Panc1 (cell line): ENCODE measurements at regions of chr20 and their contacts with region 1.

Region 1: DNA sequence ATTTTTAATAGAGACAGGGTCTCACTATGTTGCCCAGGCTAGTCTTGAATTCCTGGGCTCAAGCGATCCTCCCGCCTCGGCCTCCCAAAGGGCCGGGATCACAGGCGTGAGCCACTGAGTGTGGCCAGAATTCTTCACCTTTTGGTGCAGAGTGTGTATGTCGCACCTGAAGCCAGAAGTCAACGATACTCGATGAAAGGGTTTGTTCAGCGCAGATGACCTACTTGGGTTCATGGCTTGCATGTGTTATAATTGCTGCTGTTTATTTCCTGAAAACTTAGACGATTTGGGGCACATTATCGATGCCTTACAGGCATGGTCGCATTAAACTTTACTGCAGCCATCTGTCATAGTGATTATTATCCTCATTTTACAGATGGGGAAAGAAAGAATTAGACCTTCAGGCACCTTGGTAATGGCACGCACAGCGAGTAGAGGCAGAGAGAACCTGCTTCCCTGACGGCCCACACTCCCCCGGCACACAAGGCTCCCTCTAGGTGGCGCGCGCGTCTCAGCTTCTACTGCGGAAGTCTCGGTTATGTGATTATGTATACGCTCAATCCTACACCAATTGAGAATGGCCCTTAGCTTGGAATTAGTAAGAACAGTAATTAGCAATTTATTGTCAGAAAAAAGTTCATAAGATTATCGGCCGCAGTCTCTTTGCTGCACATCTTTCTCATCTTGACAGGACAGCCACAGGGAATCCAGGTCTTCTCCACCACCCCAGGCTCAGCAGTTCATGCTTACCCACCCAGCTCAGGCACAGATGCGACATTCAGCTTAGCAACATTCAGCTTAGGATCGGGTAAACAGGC is 212.8 kb upstream of the PROKR2 start:
- DNase-seq: peak; percentile 43
- ATAC-seq: peak; percentile 97
- H3K4me3 ChIP-seq: peak overlapping the region in 1 of 2 experiments; percentile 33; a peak in 2 of 4 replicates
- H3K27ac ChIP-seq: no peak overlapping the region
- H3K4me1 ChIP-seq: no peaks in the 10 kb centered on the region
- H3K27me3 ChIP-seq: no peaks in the 10 kb centered on the region
- CTCF ChIP-seq: peak; percentile 92

Region 2: GRCh38 chr20:5539691-5540090 is 10.2 kb after region 1 on chr20:
- CTCF ChIA-PET with region 1: interaction called, 3 read pairs
- POLR2A ChIA-PET with region 1: interaction called, 11 read pairs
- in situ Hi-C with region 1: no loop called
- intact Hi-C with region 1: no loop called
- DNase-seq: no peak
- ATAC-seq: no peak
- H3K4me3 ChIP-seq: no peak overlapping the region
- H3K27ac ChIP-seq: no peak overlapping the region
- H3K4me1 ChIP-seq: no peaks in the 10 kb centered on the region
- H3K27me3 ChIP-seq: no peaks in the 10 kb centered on the region
- CTCF ChIP-seq: no peak

Region 3: GRCh38 chr20:5933802-5934436 is 404.4 kb after region 1 on chr20:
- CTCF ChIA-PET with region 1: interaction called, 5 read pairs
- POLR2A ChIA-PET with region 1: no interaction called
- in situ Hi-C with region 1: no loop called
- intact Hi-C with region 1: loop called (anchors 5 kb)
- DNase-seq: peak; percentile 25
- ATAC-seq: peak; percentile 83
- H3K4me3 ChIP-seq: no peak overlapping the region
- H3K27ac ChIP-seq: no peak overlapping the region
- H3K4me1 ChIP-seq: no peaks in the 10 kb centered on the region
- H3K27me3 ChIP-seq: peaks cover 5% of the 10 kb centered on the region; the same call in 1 of the 2 replicates
- CTCF ChIP-seq: peak; percentile 59

Region 4: DNA sequence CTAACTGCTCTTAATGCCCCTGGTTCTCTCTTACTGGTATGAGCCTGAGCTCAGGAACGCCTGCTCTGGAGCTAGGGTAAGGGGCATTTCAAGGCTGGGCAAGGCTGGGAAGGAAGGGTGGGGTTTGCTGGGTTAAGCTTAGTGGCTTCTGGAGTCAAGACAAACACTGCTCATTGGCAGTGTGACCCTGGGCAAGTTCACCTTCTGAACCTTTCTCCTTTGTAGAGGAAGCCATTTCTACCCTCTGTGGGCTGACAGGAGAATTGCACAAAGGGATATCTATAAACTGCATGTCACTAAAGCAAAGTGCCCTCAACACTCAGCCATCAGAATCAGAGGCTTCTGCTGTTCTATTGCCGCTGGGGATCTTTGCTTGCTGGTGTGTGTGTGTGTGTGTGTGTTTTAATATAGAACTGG is 544.6 kb after region 1 on chr20:
- CTCF ChIA-PET with region 1: interaction called, 5 read pairs
- POLR2A ChIA-PET with region 1: no interaction called
- in situ Hi-C with region 1: no loop called
- intact Hi-C with region 1: loop called (anchors 1 kb)
- DNase-seq: no peak
- ATAC-seq: peak; percentile 89
- H3K4me3 ChIP-seq: no peak overlapping the region
- H3K27ac ChIP-seq: no peak overlapping the region
- H3K4me1 ChIP-seq: no peaks in the 10 kb centered on the region
- H3K27me3 ChIP-seq: 0 out of 2 replicates have a peak, but pooled peaks cover 2% of the 10 kb centered on the region
- CTCF ChIP-seq: peak; percentile 44